Gastrocnemius medialis (tissue), 4 donors: ENCODE measurements at regions of chr2 and their contacts with region 1.

Region 1: DNA sequence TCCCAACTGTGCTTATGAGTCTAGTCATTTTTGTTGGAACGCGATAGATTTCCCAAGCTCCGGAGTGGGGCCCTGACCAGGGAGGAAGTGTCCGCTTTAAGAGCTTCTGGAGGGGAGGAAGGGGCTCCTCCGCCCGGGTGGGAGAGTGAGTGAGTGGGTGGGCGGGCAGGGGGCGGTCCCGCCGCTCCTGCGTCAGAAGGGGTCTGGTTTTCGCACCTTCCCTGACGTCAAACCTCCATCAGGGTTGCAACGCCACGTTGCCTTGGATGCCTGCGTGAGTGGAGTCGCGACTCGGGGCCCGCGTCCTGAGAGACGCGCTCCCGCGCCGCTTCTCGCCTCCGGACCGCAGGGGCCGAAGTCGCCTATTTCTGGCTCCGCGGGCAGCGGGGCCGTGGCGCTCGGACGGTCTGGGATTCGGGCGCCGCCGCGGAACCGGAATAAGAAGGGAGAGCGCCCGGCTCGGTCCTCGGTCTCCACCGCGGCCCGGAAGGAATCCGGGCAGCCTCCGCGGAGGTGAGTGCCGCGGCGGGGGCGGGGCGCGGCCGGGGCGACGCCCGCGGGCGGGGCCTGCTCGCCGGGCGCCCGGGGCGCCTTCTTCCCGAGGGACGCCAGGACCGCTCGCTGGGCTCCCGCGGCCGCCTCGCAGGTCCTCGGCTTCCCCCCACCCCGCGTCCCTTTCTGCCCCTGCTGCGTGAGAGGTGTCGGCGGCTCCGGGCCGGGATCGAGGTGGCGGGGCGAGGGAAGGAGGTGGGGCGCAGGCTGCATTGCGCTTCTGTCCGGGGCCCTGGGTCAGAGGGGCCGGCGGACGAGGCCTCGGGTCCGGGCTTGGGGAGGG is at the start of gene ZDBF2:
- DNase-seq: peak; percentile 12 to 24
- ATAC-seq: peak; percentile 87 to 91
- H3K4me3 ChIP-seq: peak within 1 kb of the TSS; percentile 71 to 83 (median 76)
- H3K27ac ChIP-seq: peak within 1 kb of the TSS; percentile 81 to 85 (median 82)
- H3K4me1 ChIP-seq: peaks cover 4 to 21% of the 10 kb centered on the region in 2 donors
- H3K27me3 ChIP-seq: peaks cover 48 to 60% (median 55%) of the 10 kb centered on the region in 3 donors
- CTCF ChIP-seq: no peak
- POLR2A ChIP-seq: peak in 1 of 2 donors; percentile 43
- total RNA-seq, gene ZDBF2: 5.8 to 13.2 (median 9.5) TPM

Region 2: GRCh38 chr2:206442833-206443734 is 168.4 kb after region 1 on chr2 and contains the start of gene ADAM23:
- in situ Hi-C with region 1: no loop called
- intact Hi-C with region 1: loop called (anchors 10 kb)
- DNase-seq: peak in 1 of 2 donors; percentile 16
- ATAC-seq: peak; percentile 65 to 73
- H3K4me3 ChIP-seq: peak within 1 kb of the TSS; percentile 46 to 65 (median 60)
- H3K27ac ChIP-seq: peak within 1 kb of the TSS in 1 of 4 donors; percentile 14
- H3K4me1 ChIP-seq: peaks cover 8 to 10% of the 10 kb centered on the region in 2 donors
- H3K27me3 ChIP-seq: no peaks in the 10 kb centered on the region
- CTCF ChIP-seq: peak in 1 of 5 experiments; percentile 32
- POLR2A ChIP-seq: peak in 1 of 2 donors; percentile 25
- total RNA-seq, gene ADAM23: 0.65 to 2.4 (median 1.6) TPM